GM12878 (cell line): ENCODE measurements at regions of chr2 and their contacts with region 1.

Region 1: GRCh38 chr2:74198461-74199274 is at the start of gene MTHFD2:
- DNase-seq: peak; percentile 90
- ATAC-seq: peak; percentile 92
- H3K4me3 ChIP-seq: peak within 1 kb of the TSS; percentile 96
- H3K27ac ChIP-seq: peak within 1 kb of the TSS; percentile 93
- H3K4me1 ChIP-seq: peaks cover 8% of the 10 kb centered on the region
- H3K27me3 ChIP-seq: no peaks in the 10 kb centered on the region
- CTCF ChIP-seq: peak; percentile 81 to 90 (median 87)
- EP300 ChIP-seq: no peak
- POLR2A ChIP-seq: peak; percentile 93
- RAD21 ChIP-seq: peak; percentile 62
- polyA plus RNA-seq, gene MTHFD2: 237 to 292 TPM

Region 2: DNA sequence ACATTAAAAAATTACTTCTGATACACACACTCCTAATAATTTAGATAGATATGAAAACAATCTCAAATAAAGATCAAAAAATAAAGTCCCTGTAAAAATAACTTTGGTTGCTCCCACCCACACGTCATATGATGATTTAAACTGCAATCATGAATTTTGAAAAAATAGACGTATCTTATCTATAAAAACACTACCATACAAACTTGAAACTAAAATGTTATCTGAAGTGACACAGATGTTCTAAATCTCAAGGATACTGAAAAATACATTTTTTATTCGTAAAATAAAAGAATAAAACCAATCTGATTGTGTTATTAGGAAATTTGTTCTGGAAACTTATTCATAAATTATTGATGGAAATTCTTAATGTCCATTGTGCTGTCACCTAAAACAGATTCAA is 42.8 kb before region 1 on chr2:
- CTCF ChIA-PET with region 1: interaction called, 49 read pairs
- POLR2A ChIA-PET with region 1: interaction called, 4 read pairs
- RAD21 ChIA-PET with region 1: interaction called, 21 read pairs
- SMC1A ChIA-PET with region 1: interaction called, 17 read pairs
- in situ Hi-C with region 1: no loop called
- intact Hi-C with region 1: no loop called
- DNase-seq: no peak
- ATAC-seq: no peak
- H3K4me3 ChIP-seq: no peak overlapping the region
- H3K27ac ChIP-seq: no peak overlapping the region
- H3K4me1 ChIP-seq: no peaks in the 10 kb centered on the region
- H3K27me3 ChIP-seq: no peaks in the 10 kb centered on the region
- CTCF ChIP-seq: no peak
- EP300 ChIP-seq: no peak
- POLR2A ChIP-seq: no peak
- RAD21 ChIP-seq: no peak

Region 3: GRCh38 chr2:74168739-74169138 is 29.9 kb before region 1 on chr2:
- CTCF ChIA-PET with region 1: interaction called, 9 read pairs
- POLR2A ChIA-PET with region 1: interaction called, 4 read pairs
- RAD21 ChIA-PET with region 1: interaction called, 10 read pairs
- SMC1A ChIA-PET with region 1: interaction called, 24 read pairs
- in situ Hi-C with region 1: no loop called
- intact Hi-C with region 1: loop called (anchors 5 kb)
- DNase-seq: no peak
- ATAC-seq: peak; percentile 85
- H3K4me3 ChIP-seq: no peak overlapping the region
- H3K27ac ChIP-seq: no peak overlapping the region
- H3K4me1 ChIP-seq: peaks cover 5% of the 10 kb centered on the region
- H3K27me3 ChIP-seq: no peaks in the 10 kb centered on the region
- CTCF ChIP-seq: no peak
- EP300 ChIP-seq: peak in 1 of 2 experiments; percentile 41; a peak in 1 of 4 replicates
- POLR2A ChIP-seq: no peak
- RAD21 ChIP-seq: no peak

Region 4: GRCh38 chr2:74212702-74213410 is 14.2 kb after region 1 on chr2:
- CTCF ChIA-PET with region 1: interaction called, 11 read pairs
- POLR2A ChIA-PET with region 1: interaction called, 6 read pairs
- RAD21 ChIA-PET with region 1: interaction called, 10 read pairs
- SMC1A ChIA-PET with region 1: interaction called, 15 read pairs
- in situ Hi-C with region 1: no loop called
- intact Hi-C with region 1: no loop called
- DNase-seq: no peak
- ATAC-seq: peak; percentile 75
- H3K4me3 ChIP-seq: no peak overlapping the region
- H3K27ac ChIP-seq: no peak overlapping the region; the same call in 1 of the 2 replicates
- H3K4me1 ChIP-seq: no peaks in the 10 kb centered on the region; the same call in 1 of the 2 replicates
- H3K27me3 ChIP-seq: no peaks in the 10 kb centered on the region
- CTCF ChIP-seq: no peak
- EP300 ChIP-seq: no peak
- POLR2A ChIP-seq: no peak
- RAD21 ChIP-seq: no peak

Region 5: GRCh38 chr2:74290466-74291217 is 92.0 kb after region 1 on chr2:
- CTCF ChIA-PET with region 1: no interaction called
- POLR2A ChIA-PET with region 1: no interaction called
- RAD21 ChIA-PET with region 1: no interaction called
- SMC1A ChIA-PET with region 1: no interaction called
- in situ Hi-C with region 1: no loop called
- intact Hi-C with region 1: no loop called
- DNase-seq: peak; percentile 28
- ATAC-seq: peak; percentile 83
- H3K4me3 ChIP-seq: 0 out of 2 replicates have a peak overlapping the region, but pooled peaks have one; percentile 50
- H3K27ac ChIP-seq: peak overlapping the region; percentile 75
- H3K4me1 ChIP-seq: peaks cover 19% of the 10 kb centered on the region
- H3K27me3 ChIP-seq: no peaks in the 10 kb centered on the region
- CTCF ChIP-seq: no peak
- EP300 ChIP-seq: no peak
- POLR2A ChIP-seq: peak; percentile 54; the same call in 1 of the 2 replicates
- RAD21 ChIP-seq: no peak